PC-9 (cell line): ENCODE measurements at regions of chr16 and their contacts with region 1.

Region 1: DNA sequence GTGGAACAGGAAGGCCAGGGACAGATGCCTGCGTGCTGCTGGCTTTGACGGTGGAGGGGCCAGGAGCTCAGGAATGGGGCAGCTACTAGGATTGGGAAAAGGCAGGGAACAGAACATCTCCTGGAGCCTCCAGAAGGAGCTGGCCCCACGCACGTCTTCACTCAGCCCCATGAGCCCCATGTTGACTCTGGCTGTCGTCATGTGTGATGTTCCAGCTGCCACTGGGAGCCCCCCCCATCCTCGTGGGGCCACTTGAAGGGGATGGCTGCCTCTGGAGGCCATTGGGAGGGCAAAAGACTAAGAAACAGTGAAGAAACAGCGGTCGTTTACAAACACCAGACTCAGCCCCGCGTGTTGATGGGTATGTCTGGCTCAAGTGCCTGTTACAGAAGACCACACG is 18.5 kb upstream of the APRT start:
- DNase-seq: no peak
- H3K4me3 ChIP-seq: no peak overlapping the region
- H3K27ac ChIP-seq: no peak overlapping the region
- H3K4me1 ChIP-seq: no peaks in the 10 kb centered on the region
- H3K27me3 ChIP-seq: no peaks in the 10 kb centered on the region
- CTCF ChIP-seq: no peak

Region 2: DNA sequence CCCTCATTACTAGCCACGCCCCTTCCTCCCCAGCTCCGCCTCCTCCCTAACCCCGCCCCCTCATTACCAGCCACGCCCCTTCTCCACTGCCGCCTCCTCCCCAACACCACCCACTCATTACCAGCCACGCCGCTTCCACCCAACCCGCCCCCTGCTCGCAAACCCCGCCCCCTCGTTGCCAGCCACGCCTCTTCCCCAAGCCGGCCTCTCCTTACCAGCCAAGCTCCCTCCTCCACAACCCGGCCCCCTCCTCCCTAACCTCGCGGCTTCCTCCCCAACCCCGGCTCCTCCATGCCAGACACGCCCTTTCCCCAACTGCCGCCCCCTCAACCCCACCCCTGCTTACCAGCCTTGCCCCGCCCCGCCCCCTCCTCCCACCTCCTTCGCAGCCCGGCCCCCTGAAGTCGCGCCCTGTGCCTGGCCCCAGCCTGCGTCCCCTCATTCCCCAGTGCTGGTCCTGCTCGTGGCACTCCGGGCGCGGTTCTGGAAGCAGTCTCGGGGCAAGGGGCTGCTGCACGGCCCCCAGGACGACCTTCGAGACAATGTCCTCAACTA is 362.8 kb after region 1 on chr16:
- CTCF ChIA-PET with region 1: no interaction called
- POLR2A ChIA-PET with region 1: interaction called, 15 read pairs
- intact Hi-C with region 1: no loop called
- DNase-seq: peak in 1 of 2 experiments; percentile 43
- H3K4me3 ChIP-seq: no peak overlapping the region
- H3K27ac ChIP-seq: no peak overlapping the region
- H3K4me1 ChIP-seq: no peaks in the 10 kb centered on the region
- H3K27me3 ChIP-seq: no peaks in the 10 kb centered on the region
- CTCF ChIP-seq: no peak